Left ventricle myocardium superior (tissue), 1 donor: ENCODE measurements at regions of chr7 and their contacts with region 1.

Region 1: GRCh38 chr7:139118234-139118804 is 8.8 kb upstream of the ZC3HAV1 start:
- DNase-seq: no peak
- ATAC-seq: no peak

Region 2: DNA sequence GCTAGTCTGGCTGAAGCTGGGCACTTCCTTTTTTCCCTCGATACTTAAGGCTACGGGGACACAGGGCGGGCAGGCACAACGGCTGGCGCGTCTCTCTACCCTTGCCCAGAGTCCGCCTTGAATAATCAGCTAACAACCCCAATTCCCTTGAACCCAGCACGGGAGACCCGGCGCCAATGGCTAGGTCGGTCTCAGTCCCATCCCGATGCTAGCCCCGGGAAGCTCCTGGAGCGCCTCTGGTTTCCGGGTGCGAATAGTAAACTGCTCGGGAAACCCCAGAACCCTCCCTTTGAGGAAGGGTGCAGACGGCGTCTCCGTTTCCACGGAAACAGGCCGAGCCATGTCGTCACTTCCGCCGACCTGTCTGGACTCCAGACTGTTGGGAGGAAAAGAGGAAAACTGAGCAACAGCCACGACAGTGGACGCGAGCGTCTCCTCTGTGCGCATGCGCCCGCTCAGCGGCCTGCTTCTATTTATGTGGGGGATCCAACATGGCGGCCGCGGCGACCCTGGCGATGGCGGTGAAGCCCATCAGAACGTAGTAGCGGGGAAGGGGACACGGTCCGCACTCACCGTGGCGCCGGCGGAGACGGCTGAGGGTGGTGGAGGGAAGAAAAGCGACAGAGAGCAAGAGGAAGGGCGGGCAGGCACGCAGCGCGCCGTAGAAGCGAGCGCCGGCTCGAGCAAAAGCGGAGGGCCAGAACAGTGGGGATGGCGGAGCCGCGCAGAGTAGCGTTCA is 112.6 kb after region 1 on chr7 and contains the start of gene UBN2:
- intact Hi-C with region 1: loop called (anchors 10 kb)
- DNase-seq: peak; percentile 98
- ATAC-seq: peak; percentile 98
- total RNA-seq, gene UBN2: 14.1 TPM

Region 3: DNA sequence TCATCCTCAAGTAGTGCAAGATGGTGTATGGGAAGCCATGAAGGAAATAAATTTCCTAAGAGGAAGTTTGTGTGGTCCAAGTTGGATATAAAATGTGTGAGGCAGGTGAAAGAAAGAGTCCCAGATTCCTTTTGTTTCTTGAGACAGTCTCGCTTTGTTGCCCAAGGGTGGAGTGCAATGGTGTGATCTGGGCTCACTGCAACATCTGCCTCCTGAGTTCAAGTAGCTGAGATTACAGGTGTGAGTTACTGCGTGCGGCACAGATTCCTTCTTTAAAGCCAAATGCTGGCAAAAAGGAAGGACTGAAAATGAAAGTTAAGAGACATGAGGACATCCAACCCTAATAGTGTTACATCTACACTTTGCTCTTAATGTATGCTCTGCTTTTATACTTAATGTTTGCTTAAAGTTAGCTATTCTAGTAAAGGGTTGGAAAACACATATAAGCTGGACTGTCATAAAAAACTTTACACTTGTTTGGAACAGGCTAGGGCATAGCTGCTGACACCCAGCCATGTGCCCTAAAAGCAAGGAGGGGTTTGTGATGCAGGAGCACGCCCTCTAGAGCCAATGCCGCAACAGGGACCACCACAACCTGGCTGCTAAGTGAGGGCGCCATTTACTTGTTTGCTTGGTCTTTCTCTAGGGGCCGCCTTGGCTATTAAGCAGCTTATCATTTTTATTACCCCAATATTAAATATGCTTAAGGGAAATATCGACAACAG is 439.7 kb after region 1 on chr7:
- intact Hi-C with region 1: no loop called
- DNase-seq: no peak
- ATAC-seq: no peak